ENCODE measurements at regions of chr5 and their contacts with region 1.

Region 1: GRCh38 chr5:157618191-157618772 is 34.0 kb downstream of the SOX30 start:
- DNase-seq: no peak
- H3K4me3 ChIP-seq: no peak overlapping the region
- H3K27ac ChIP-seq: no peak overlapping the region
- H3K4me1 ChIP-seq: peaks cover 0 to 3% (median 0%) of the 10 kb centered on the region in 4 donors
- H3K27me3 ChIP-seq: no peaks in the 10 kb centered on the region
- CTCF ChIP-seq: no peak
- EP300 ChIP-seq: no peak
- POLR2A ChIP-seq: no peak

Region 2: DNA sequence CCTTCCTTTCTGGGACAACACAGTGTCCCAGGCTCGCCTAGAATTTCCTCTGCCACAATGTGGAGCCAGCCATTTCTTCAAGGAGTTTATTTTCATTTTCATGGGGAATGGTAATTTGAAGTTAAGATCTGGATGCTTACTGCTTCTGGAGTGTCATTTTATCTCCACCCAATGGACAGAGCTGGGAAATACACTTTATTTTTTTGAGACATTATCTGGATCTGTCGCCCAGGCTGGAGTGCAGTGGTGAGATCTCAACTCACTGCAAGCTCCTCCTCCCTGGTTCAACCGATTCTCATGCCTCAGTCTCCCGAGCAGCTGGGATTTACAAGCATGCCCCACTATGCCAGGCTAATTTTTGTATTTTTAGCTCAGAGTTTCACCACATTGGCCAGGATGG is 100.2 kb after region 1 on chr5:
- in situ Hi-C with region 1: no loop called
- intact Hi-C with region 1: no loop called
- DNase-seq: no peak
- H3K4me3 ChIP-seq: no peak overlapping the region
- H3K27ac ChIP-seq: peak overlapping the region in 2 of 4 donors; percentile 34
- H3K4me1 ChIP-seq: peaks cover 0 to 12% (median 9%) of the 10 kb centered on the region in 4 donors
- H3K27me3 ChIP-seq: no peaks in the 10 kb centered on the region
- CTCF ChIP-seq: peak; percentile 53 to 86 (median 59)
- EP300 ChIP-seq: no peak
- POLR2A ChIP-seq: no peak

Region 3: DNA sequence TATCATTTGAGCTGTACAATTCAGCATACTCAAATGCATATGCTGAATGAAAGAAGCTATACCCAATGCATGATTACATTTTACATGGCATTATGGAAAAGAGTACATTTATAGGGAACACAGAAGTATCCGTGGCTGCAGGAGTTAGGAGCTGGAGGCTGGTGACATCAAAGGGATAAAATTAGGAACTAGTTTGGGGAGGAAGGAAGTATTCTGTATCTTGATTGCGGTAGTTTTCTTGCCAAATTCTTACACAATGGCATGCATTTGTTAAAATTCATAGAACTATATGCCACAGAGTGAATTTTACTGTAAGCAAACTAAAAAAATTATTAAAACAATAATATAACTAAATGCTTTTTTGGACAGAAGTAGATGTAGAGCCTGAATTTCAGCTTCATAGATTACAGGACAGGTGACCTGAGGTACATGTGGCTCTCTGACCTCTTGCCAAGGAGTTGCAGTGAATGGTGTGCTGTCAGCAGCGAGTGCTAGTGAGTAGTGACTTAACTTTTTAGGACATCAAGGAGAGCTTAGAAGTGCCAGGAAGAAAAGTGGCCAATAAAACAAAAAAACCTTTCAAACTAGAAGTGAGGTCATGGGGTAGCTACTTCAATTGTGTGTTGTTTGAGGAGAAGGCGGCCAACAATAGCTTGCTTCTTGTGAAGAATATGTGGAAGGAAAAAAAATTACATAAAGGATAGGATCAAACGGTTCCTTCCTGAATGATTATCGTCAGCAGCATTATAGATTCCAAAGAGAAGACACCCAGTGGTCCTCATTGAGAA is 755.5 kb after region 1 on chr5:
- in situ Hi-C with region 1: no loop called
- intact Hi-C with region 1: no loop called
- DNase-seq: no peak
- H3K4me3 ChIP-seq: no peak overlapping the region
- H3K27ac ChIP-seq: no peak overlapping the region
- H3K4me1 ChIP-seq: no peaks in the 10 kb centered on the region
- H3K27me3 ChIP-seq: no peaks in the 10 kb centered on the region
- CTCF ChIP-seq: no peak
- EP300 ChIP-seq: no peak
- POLR2A ChIP-seq: no peak

Region 4: DNA sequence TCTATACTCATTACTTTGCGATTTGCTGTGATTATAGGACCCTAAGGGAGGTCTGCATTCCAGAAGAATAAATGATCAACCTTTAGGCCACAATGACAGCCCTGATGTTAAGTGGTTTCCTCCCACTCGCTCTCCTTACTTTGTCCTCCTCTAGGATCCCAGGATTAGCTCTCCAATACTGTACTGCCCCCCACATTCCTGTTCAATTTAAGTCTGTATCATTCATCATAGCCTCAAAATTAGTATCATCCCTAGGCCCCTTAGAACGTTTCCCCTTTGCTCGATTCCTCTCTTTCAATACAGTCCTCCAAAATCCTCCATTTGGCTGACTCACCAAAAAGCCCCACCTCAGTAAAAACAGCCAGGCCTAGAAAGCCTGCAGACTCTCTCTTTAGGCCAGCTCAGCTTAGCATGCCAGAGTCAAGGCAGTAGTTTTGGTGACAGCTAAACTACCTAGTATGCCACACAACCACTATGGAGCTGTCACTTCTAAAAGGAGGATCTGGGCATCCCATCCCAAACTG is 1566.6 kb after region 1 on chr5:
- in situ Hi-C with region 1: no loop called
- intact Hi-C with region 1: loop called (anchors 5 kb)
- DNase-seq: no peak
- H3K4me3 ChIP-seq: no peak overlapping the region
- H3K27ac ChIP-seq: peak overlapping the region; percentile 3 to 24 (median 18)
- H3K4me1 ChIP-seq: peaks cover 0 to 60% (median 15%) of the 10 kb centered on the region in 4 donors
- H3K27me3 ChIP-seq: no peaks in the 10 kb centered on the region
- CTCF ChIP-seq: no peak
- EP300 ChIP-seq: no peak
- POLR2A ChIP-seq: no peak